Right cardiac atrium (tissue), 5 donors: ENCODE measurements at regions of chr15 and their contacts with region 1.

Region 1: DNA sequence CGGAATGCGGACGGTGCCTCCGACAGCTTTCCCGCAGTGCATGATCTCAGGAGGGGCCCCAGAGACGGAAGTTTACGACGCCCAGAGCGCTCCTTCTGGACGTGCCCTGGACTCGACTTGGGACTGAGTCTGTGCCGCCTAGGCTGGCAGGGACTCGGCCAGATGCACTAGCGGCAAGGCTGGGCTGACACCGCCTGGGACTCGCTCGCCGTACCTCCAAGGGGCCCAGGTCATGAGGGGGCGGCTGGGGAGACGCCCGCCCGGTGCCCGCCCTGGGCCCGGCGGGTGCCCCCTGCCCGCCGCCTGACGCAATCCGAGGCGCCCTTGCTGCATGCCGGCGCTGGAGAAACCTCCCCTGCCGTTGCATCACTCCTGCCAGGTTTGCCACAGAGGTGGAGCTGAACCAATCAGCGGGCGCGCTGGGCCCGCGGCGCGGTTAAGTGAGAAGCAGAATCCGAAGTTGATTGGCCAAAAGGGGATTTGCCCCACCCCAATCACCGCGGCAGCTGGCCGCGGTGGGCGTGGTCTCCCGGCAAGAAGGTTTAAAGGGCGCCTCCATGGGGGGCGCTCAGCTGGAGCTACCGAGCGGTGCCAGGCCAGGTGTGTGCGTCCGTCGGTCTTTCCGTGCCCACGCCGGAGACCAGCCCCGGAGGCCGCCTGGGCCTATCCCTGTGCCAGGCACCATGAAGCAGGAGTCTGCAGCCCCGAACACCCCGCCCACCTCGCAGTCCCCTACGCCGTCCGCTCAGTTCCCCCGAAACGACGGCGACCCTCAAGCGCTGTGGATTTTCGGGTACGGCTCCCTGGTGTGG is at the start of gene CHAC1:
- DNase-seq: peak; percentile 95 to 98 (median 97)
- ATAC-seq: peak; percentile 95 to 96
- H3K4me3 ChIP-seq: peak within 1 kb of the TSS; percentile 67
- H3K27ac ChIP-seq: peak within 1 kb of the TSS; percentile 36
- H3K4me1 ChIP-seq: peaks cover 2% of the 10 kb centered on the region
- H3K27me3 ChIP-seq: no peaks in the 10 kb centered on the region
- total RNA-seq, gene CHAC1: 1.6 to 2.0 (median 1.7) TPM

Region 2: DNA sequence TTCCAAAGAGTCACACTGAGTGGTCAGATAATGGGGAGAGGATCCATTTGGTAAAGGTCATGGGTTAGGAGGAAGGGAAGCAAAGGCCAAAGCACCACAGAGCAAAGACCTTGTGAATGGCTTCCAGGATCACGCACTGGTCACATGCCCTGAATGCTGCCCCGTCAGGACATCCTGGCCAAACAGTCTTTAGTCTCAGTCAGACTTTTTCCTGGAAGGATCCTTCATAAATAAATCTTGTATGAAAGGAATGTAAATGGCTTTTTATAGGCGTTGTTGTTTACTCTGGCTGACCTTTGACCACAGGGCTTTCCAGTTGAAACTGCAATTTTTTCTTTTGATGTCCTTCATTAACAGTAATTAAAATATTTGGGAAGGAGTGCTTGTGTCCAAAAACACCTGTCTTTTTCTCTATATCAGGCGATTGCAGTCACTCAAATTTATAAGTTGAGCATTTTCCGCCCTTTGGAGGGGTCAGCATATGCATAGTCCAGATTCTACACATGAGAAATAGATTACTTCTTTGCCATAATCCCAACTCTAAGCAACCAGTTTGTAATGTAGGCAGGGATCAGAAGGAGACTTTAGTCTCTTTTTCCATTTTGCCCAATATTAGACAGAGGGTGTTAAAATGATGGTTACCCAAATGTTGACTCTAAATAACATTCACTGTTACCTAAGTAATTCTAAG is 48.6 kb after region 1 on chr15:
- intact Hi-C with region 1: loop called in 1 of 4 experiments (anchors 10 kb)
- DNase-seq: no peak
- ATAC-seq: peak in 1 of 2 donors; percentile 26
- H3K4me3 ChIP-seq: no peak overlapping the region
- H3K27ac ChIP-seq: no peak overlapping the region
- H3K4me1 ChIP-seq: no peaks in the 10 kb centered on the region
- H3K27me3 ChIP-seq: no peaks in the 10 kb centered on the region

Region 3: DNA sequence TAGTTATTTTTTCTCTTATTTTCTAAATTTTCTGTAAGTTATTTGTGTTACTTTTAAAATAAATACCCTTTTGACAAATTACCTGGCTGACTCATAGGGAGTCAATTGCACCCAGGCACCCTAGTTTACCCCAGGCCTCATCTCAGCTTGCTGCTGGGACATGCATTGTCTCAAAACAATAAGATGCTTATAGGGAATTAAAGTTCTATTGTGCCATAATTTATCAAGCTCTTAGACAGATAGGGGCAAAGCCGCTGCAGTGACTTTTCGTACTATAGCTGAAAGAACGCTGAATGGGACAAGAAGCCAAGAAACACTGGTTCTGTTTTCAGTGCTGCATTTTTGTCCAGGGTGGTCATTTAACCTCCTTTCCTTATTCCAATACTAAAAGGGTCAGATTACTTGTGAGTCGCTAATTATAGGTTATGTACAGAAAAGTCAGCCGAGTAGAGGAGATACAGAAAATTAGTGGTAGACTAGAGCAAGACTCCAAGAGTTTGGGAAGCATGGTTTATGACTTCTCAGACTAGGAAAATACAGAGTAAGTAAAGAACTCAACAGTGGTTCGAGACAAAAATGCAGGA is 227.2 kb after region 1 on chr15:
- intact Hi-C with region 1: no loop called
- DNase-seq: no peak
- ATAC-seq: no peak
- H3K4me3 ChIP-seq: no peak overlapping the region
- H3K27ac ChIP-seq: no peak overlapping the region
- H3K4me1 ChIP-seq: no peaks in the 10 kb centered on the region
- H3K27me3 ChIP-seq: no peaks in the 10 kb centered on the region

Region 4: GRCh38 chr15:41634072-41634626 is 681.0 kb after region 1 on chr15:
- intact Hi-C with region 1: no loop called
- DNase-seq: no peak
- ATAC-seq: no peak
- H3K4me3 ChIP-seq: no peak overlapping the region
- H3K27ac ChIP-seq: no peak overlapping the region
- H3K4me1 ChIP-seq: peaks cover 7% of the 10 kb centered on the region
- H3K27me3 ChIP-seq: no peaks in the 10 kb centered on the region